KBM-7 (cell line): ENCODE measurements at regions of chr3 and their contacts with region 1.

Region 1: GRCh38 chr3:53375019-53375418 is 27.7 kb upstream of the DCP1A start:
- DNase-seq: peak; percentile 78

Region 2: DNA sequence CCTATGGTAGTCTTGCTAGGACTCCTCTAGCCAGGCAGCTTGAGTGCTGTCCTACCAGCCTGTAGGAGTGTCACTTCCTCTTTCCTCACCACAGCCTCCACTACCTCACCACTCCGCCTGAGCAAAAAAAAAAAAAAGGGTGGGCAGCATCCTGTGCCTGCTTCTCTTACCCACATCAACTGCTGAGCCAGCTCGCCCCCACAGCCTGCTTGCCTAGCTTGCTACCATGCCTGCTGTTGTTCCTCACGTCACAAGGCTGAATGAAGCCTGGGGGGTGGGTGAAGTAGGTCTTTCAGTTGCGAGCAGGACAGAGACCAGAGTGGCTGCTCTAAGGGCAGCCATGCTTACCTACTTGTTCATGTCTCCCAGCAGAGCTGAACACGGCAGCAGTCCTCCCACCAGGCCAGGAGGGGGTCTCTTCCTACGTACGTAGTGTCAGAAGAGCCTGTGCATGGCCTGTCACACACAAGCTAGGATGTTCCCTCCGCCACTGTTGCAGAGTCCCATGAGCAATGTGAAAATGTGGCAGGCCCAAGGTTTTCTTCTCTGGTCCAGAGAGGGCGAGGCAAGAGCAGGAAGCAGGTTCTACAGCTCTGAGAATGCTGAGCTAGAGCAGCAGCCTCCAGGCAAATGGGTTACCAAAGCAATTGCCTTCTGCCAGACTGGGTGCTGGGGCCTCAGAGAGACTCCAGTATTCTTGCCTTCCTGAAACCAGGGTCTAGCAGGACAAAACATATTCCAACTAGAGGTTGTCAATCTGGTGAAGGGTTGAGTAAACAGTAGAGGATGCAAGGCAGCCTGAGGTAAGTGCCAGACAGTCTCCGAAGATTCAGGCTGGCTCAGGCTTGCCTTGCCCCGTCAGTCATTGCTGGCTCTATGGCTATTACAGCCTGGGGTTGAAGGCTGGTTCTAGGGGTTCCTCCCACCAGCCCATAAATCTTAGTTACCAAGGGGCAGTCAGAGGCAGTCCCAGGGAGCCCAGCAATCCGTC is 1121.4 kb before region 1 on chr3:
- in situ Hi-C with region 1: no loop called
- DNase-seq: peak; percentile 99

Region 3: GRCh38 chr3:53045518-53046170 is 329.4 kb before region 1 on chr3 and contains the start of gene SFMBT1:
- in situ Hi-C with region 1: no loop called
- DNase-seq: peak; percentile 68

Region 4: GRCh38 chr3:53709860-53710674 is 335.0 kb after region 1 on chr3:
- in situ Hi-C with region 1: loop called (anchors 25 kb)
- DNase-seq: peak; percentile 95